GM10248 (cell line): ENCODE measurements at regions of chr15 and their contacts with region 1.

Region 1: GRCh38 chr15:80010131-80010673 is 39.2 kb upstream of the BCL2A1 start:
- DNase-seq: no peak
- CTCF ChIP-seq: no peak

Region 2: DNA sequence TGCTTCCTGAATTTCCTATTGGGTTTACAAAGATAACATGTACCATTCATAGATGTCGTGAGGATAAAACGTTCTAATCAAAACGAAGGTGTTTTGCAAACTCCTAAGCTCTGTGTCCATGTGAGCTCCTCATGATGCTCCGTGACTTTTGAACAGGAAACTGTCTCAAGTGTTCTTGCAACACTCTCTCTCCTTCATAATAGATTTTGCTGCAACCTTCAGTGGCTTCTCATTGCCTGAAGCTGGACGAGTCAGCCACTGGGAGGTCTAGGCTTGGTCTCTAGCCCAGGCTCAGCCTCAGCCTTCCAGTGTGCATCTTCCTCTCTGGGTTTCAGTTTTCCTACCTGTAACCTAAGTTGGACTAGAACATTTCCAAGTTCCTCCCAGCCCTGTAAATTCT is 20.5 kb before region 1 on chr15:
- CTCF ChIA-PET with region 1: interaction called, 32 read pairs
- POLR2A ChIA-PET with region 1: no interaction called
- DNase-seq: no peak
- CTCF ChIP-seq: no peak

Region 3: DNA sequence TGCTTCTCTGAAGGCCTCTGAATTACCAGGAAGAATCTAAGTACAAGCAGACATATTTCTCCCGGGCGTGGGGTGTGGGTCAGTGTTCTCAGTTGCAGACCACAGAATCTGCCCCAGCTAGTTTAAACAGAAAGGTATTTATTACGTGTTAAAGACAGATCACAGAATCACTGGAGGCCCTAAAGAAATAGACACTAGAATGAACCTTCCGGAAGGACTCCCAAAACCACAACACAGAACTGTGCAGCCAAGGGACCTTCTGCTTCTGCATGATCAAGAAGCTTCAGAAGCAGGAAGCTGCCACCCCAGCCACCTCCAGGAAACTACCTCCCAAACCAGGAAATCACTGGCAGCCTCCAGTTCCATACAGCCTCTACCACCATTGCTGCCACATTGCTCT is 16.6 kb after region 1 on chr15:
- CTCF ChIA-PET with region 1: no interaction called
- POLR2A ChIA-PET with region 1: no interaction called
- DNase-seq: no peak
- CTCF ChIP-seq: no peak

Region 4: GRCh38 chr15:80093854-80094418 is 83.7 kb after region 1 on chr15:
- CTCF ChIA-PET with region 1: no interaction called
- POLR2A ChIA-PET with region 1: no interaction called
- DNase-seq: no peak
- CTCF ChIP-seq: no peak

Region 5: DNA sequence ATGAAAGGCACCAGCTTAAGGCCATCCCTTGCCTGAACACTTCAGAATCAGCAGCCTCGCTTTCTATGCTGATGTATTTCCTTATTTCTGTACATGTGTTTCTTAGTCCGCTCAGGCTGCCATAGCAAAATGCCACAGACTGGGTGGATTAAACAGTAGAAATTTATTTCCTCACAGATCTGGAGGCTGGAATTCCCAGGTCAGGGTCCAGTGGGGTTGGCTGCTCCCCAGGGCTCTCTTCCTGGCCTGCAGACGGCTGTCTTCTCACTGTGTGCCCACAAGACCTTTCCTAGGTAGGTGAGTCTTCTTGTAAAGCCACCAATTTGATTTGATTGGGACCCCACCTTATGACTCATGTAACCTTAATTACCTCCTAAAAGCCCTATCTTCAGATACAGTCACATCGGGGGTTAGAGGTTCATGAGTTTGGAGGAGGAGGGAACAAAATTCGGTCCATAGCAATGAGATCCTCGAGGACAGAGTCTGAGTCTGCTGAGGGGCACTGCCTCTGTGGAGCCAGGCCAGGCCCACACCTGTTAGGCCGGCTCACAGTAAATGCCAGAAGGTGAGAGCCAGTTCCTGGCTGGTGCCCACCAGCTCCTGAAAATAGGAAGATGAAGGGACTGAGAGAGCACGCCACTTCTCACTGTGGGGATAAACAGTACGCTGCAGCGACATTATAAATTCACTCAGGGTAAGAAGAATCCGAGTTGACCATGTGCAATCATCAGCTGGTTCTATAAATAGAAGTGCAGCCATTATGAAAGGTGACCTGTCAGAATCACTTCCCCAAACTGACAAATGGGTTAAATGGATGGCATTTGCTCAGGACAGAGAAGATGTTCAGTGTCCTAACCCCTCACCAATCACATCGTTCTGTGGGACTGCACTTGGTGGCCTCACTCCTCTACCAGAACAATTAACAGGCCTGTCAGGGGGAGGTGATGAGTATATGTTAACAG is 200.7 kb after region 1 on chr15:
- CTCF ChIA-PET with region 1: no interaction called
- POLR2A ChIA-PET with region 1: no interaction called
- DNase-seq: peak; percentile 43
- CTCF ChIP-seq: no peak

Region 6: DNA sequence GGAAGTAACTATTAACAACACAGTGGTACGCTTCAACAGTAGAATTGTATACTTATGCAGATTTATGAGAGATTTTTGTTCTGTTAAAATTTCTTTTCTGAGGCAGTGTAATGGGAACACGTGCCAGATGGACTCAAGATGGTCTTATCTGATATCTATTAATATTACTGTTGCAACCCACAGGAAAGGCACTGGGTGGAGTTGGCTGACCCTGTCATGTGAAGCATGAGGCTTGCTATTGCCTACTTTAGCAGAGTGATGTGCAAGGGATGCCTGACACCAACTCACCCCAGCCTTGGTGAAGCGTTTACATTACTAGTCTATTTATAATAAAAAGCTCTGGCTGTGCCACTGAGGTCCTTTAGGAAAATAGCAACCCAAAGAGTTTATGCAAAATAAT is 374.2 kb after region 1 on chr15:
- CTCF ChIA-PET with region 1: no interaction called
- POLR2A ChIA-PET with region 1: no interaction called
- DNase-seq: no peak
- CTCF ChIP-seq: no peak